ENCODE measurements at regions of chr1 and their contacts with region 1.

Region 1: GRCh38 chr1:17606826-17607440 is 67.4 kb downstream of the ARHGEF10L start:
- DNase-seq: peak; percentile 63
- H3K4me3 ChIP-seq: no peak overlapping the region
- H3K27ac ChIP-seq: no peak overlapping the region
- H3K4me1 ChIP-seq: no peaks in the 10 kb centered on the region
- CTCF ChIP-seq: peak; percentile 91

Region 2: DNA sequence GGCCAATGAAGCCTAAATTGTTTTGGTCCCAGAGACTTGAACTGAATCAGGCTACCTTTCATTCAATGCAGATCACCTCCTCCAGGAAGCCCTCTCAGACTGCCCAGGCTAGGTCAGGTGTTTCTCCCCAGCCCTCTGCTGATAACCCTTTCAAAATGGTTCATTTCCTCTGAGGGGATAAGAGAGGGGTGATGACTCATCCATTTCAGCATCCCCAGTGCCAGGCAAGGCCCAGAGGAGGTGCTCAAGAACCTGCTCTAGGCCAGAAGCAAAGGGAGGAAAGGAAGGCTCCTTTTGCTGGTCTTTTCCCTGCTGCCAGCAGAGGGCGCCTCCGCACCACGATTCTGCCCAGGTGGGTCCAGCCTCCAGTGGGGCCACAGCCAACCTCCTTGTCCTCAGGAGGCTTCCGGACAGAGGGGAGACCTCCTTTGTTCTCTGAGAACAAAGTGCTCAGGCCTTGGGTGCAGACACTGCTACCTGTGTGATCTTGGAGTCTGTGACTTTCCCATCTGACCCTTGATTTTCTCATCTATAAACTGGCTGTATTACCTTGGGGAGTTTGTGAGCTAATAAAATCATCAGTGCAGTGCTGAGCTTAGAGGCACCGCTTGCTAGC is 112.7 kb before region 1 on chr1:
- CTCF ChIA-PET with region 1: interaction called, 5 read pairs
- POLR2A ChIA-PET with region 1: no interaction called
- intact Hi-C with region 1: loop called (anchors 2 kb)
- DNase-seq: peak; percentile 70
- H3K4me3 ChIP-seq: no peak overlapping the region
- H3K27ac ChIP-seq: no peak overlapping the region
- H3K4me1 ChIP-seq: no peaks in the 10 kb centered on the region
- CTCF ChIP-seq: peak; percentile 97

Measured in OCI-LY7 (cell line).